Left cardiac atrium (tissue), 4 donors: ENCODE measurements at regions of chr4 and their contacts with region 1.

Region 1: GRCh38 chr4:85968945-85969819 is 390.7 kb downstream of the MAPK10 start:
- DNase-seq: no peak
- ATAC-seq: peak; percentile 32 to 68

Region 2: DNA sequence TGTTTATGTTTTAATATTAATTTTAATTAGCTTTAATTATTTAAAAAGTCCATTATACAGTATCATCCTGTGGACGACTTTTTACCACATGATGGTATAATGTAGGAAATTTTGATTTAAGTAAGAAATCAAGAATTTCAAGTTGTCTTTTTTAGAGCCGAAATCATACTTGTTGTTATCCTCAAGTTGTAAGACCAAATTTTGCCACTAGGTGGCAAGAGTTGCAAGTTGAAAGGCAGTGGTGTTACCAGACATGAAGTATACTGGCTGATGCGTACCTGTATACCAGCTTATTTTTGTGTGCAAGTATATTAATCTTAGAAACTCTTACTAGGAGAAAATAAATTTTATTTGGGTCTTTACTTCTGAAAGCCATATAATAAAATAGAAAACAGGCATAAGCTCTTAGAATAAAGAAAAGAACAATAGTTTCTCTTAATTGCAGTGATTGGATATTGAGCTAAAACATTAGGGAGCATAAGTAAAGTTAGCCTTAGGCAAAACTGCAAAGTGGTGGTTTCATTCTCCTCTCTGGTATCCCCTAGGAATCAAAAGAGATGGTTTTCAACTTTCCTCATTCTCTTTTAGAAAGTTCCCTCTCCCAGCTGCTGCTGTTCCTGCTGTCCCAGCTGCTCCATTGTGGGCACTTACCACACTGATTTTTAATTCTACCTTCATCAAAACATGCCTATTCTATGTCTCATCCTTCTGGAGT is 884.6 kb before region 1 on chr4:
- intact Hi-C with region 1: loop called in 1 of 2 experiments (anchors 10 kb)
- DNase-seq: no peak
- ATAC-seq: peak in 1 of 2 donors; percentile 66

Region 3: DNA sequence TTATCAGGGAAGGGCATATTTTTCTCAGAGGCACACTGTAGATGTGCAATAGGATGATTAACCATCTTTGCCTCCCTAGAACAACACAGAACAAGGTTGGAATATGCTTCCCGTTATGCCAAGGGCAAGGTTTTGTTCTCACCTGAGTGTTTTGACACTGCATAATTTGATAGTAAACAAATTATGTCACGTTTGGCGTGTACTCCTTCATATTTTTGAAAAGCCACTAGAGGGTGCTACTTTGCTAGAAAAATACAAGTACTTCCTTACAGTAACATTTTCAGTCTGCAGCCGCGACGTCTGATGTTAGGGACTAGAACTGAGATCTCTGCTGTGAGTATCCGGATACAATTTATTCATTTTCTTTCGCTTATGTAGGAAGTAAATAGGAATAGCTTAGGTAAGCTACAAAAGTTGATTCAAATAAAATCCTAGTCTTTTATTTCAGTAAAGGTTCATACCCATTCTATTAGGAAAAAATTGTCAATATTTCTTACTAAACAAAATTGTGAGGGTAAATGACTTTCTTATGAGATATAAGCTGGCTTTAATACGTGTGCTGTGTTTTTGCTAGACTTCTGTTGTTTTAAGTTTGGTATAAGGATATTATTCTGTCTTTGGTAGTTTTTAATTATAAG is 821.6 kb before region 1 on chr4:
- intact Hi-C with region 1: loop called in 1 of 2 experiments (anchors 10 kb)
- DNase-seq: peak; percentile 47
- ATAC-seq: peak; percentile 83 to 85

Region 4: DNA sequence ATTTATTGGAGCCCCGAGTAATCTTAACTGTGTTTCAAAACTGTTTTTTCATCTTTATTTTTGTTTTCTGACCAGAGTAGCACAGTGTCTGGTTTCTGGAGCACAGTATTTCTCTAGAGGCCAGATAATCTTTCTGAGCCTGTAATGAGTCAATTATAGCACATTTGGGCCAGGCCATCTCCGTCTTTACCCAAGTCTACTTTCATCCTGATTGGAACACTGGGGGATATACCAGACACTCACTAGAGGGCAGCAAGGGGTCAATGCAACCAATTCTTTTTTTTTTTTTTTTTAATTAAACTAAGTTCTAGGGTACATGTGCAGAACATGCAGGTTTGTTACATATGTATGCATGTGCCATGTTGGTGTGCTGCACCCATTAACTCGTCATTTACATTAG is 212.2 kb before region 1 on chr4:
- intact Hi-C with region 1: loop called in 1 of 2 experiments (anchors 5 kb)
- DNase-seq: no peak
- ATAC-seq: peak; percentile 44 to 75

Region 5: DNA sequence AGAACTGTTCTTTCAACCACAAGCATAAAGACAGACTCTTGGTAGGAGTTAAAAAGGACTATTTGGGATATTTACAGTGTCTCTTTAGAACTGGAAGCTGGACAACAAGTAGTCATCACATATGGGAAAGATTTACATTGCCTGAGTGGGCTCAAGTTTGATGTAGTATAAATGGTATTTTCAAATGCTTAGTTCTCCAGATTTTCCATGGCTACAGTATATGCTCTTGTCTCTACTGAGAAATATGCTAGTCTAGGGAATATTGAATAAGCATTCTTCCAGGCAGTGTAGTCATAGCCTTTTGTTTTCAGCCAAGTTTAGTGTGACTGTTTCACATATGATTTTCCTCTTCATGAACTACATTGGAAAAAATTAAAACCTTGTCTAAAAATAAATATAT is 178.6 kb before region 1 on chr4:
- intact Hi-C with region 1: loop called (anchors 5 to 10 kb)
- DNase-seq: no peak
- ATAC-seq: peak in 1 of 2 donors; percentile 36

Region 6: GRCh38 chr4:85798012-85798770 is 171.0 kb before region 1 on chr4:
- intact Hi-C with region 1: loop called (anchors 5 to 10 kb)
- DNase-seq: no peak
- ATAC-seq: no peak